KBM-7 (cell line): ENCODE measurements at regions of chr2 and their contacts with region 1.

Region 1: GRCh38 chr2:42513257-42513918 is 19.6 kb upstream of the KCNG3 start:
- DNase-seq: peak; percentile 60

Region 2: DNA sequence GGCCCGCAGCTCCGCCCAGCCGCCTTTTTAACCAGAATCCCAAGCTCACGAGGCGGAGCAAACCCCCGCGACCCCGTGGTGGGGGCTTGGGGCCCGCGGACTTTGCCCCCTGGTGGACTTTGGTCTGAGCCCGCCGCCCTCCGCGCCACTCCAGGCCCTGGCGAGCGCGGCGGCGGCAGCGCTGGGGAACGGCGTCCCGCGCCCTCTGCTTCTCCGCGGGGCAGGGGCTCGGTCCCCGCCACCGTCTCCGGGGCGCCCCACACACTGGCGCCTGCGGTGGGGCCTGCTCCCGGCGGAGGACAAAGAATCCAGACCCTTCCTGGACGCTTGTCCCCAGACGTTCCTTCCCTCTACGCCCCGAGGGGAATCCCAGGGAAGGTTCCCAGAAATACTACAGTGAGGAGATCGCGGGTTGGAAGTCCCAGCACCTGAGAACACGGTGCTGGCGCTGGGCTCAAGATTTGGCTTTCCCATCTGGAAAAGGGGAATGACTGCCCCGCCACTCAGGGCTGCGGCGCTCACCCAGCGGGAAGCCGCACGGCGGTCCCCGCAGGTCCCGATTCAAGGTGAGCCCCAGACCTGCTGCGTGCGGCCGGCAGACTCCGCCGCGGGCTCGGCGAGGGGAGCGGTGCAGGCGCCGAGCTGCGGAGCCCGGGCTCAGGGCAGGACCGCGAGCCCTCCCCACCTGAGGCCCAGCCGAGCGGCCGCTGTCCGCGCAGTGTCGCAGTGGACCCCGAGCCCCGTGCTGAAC is 279.4 kb after region 1 on chr2 and contains the start of gene HAAO:
- in situ Hi-C with region 1: loop called (anchors 25 kb)
- DNase-seq: peak; percentile 73